Activated CD4-positive, alpha-beta memory T cell treated with anti-CD3 and anti-CD28 coated beads, Interleukin-2, amount 10 ng/mL, durations not matched to agents 7 days and 5 days (primary cell): ENCODE measurements at regions of chr11 and their contacts with region 1.

Region 1: DNA sequence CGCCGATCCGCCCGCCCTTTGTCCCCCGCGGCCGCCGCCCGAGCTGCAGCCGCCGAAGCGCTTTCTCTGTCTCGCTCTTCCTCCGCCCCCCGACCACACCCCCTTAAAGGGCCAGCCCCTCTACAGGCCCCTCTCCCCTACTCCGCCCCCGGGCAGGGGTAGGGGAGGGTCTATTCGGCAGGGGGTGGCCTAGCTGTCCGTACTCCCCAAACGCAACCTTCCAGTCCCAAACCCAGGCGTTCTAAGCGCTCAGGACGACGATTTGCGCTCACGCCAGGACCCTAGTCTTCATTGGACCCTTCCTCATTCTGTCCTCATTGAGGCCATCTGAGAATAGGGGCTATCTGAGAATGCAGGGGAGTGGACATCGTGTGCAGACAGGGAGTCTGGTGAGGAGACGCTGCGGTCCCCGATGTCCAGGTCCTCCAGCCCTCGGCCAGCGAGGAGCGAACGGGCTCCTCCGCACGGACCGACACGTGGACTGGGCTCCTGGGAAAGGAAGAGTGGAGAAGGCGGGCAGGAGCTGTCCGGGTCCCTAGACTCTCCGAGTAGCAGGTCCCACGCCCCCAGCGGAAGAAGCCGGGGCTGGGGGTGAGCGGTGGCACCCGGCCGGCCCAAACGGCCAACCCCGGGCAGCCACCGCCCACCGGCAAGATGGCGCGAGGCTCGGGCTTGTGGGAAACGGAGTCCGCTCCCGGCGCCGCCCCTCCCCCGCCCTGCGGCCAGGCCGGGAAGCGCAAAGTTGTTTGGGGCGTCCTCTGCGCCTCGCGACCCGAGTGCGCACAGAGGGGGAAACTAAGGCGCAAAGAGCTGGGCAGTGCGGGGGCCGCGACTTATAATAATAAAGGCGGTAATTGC is at the start of gene PPP1R14B:
- DNase-seq: peak; percentile 84
- H3K4me3 Mint-ChIP-seq: peak within 1 kb of the TSS; percentile 86
- H3K27ac Mint-ChIP-seq: peak within 1 kb of the TSS; percentile 85
- H3K4me1 Mint-ChIP-seq: peaks cover 53% of the 10 kb centered on the region
- H3K27me3 Mint-ChIP-seq: peaks cover 3% of the 10 kb centered on the region
- total RNA-seq, gene PPP1R14B: 96.9 to 105 TPM

Region 2: GRCh38 chr11:64225612-64226506 is 21.2 kb before region 1 on chr11 and contains the starts of genes NUDT22 and TRPT1:
- CTCF ChIA-PET with region 1: interaction called, 7 read pairs
- POLR2A ChIA-PET with region 1: interaction called, 49 read pairs
- DNase-seq: peak; percentile 94
- H3K4me3 Mint-ChIP-seq: peak within 1 kb of the TSS; percentile 88
- H3K27ac Mint-ChIP-seq: peak within 1 kb of the TSS; percentile 79
- H3K4me1 Mint-ChIP-seq: peaks cover 40% of the 10 kb centered on the region
- H3K27me3 Mint-ChIP-seq: no peaks in the 10 kb centered on the region
- total RNA-seq, gene NUDT22: 84.8 to 90.6 TPM
- total RNA-seq, gene TRPT1: 34.7 to 35.3 TPM

Region 3: GRCh38 chr11:64263021-64263946 is 16.2 kb after region 1 on chr11:
- CTCF ChIA-PET with region 1: interaction called, 24 read pairs
- POLR2A ChIA-PET with region 1: interaction called, 131 read pairs
- DNase-seq: no peak
- H3K4me3 Mint-ChIP-seq: no peak overlapping the region
- H3K27ac Mint-ChIP-seq: no peak overlapping the region
- H3K4me1 Mint-ChIP-seq: peaks cover 17% of the 10 kb centered on the region
- H3K27me3 Mint-ChIP-seq: no peaks in the 10 kb centered on the region

Region 4: GRCh38 chr11:64284048-64284961 is 37.2 kb after region 1 on chr11 and contains the start of gene BAD:
- CTCF ChIA-PET with region 1: interaction called, 3 read pairs
- POLR2A ChIA-PET with region 1: interaction called, 17 read pairs
- DNase-seq: peak; percentile 95
- H3K4me3 Mint-ChIP-seq: peak within 1 kb of the TSS; percentile 83
- H3K27ac Mint-ChIP-seq: peak within 1 kb of the TSS; percentile 82
- H3K4me1 Mint-ChIP-seq: peaks cover 28% of the 10 kb centered on the region
- H3K27me3 Mint-ChIP-seq: no peaks in the 10 kb centered on the region
- total RNA-seq, gene BAD: 36.5 to 39.2 TPM